Calu3 (cell line): ENCODE measurements at regions of chr15 and their contacts with region 1.

Region 1: DNA sequence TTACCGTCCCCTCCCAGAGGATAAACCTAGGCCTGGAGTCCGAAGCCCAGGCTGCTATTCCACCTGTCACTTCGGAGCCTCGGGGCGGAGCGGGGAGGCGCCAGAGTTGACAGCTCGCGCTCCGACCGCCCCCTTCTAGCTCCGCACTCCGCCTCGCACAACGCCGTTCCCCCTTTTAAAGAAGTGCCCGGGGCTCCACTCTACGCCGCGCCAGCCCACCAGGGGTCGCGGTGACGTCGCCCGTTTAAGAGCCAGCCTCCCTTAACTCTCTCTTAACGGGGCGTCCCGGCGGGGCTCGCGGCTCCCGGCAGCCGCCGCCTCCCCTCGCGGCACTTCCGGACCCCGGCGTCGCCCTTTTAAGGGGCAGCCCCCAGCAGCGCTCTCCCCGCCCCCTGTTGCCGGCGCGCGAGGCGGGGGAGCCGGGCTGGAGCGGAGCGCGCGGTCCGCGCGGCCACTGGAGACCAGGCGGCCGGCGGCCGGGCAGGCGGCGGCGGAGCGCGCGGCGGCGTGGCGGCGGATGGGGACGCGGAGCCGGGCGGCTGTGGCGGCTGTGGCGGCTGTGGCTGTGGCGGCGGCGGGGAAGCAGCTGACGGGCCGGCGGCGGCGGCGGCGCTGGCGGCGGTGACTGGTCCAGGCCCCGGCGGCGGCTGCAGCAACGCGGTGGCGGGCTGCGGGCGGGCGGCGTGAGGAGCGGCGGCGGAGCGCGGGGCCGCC is at the start of gene INAFM2:
- DNase-seq: peak; percentile 87
- H3K4me3 Mint-ChIP-seq: peak within 1 kb of the TSS; percentile 66
- H3K27ac Mint-ChIP-seq: no peak within 1 kb of the TSS
- H3K4me1 Mint-ChIP-seq: no peaks in the 10 kb centered on the region
- H3K27me3 Mint-ChIP-seq: no peaks in the 10 kb centered on the region
- CTCF ChIP-seq: no peak
- total RNA-seq, gene INAFM2: 14.3 and 16.6 TPM in 2 replicates

Region 2: DNA sequence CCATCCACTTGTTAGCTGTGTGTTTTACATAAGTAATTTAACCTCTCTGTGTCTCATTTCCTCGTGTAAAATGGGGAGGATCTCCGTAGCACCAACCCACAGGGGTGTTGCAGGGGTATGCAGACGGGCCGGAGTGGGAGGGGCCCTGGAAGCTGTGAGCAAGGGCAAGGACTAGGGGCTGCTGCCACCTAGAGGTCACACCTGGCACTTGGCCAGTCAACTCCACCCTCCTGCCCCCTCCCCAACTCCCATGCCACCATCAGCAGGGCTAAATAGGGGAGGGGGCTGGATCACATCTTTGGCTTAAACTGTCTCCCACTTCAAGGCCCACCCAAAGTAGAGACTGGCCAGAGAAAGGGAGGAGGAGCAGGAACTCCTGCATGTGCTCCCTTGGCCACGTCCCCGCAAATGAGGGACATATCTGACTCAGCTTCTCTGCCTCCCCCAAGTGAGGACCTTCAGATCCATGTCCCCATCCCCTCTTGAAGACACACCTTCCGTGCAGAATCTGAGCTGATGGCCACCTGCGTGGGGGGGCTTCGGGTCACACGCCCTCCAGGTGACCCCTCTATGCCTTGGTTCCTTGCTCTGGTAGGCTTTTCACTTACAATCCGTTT is 14.8 kb after region 1 on chr15:
- CTCF ChIA-PET with region 1: interaction called, 23 read pairs
- intact Hi-C with region 1: no loop called
- DNase-seq: peak; percentile 74
- H3K4me3 Mint-ChIP-seq: peak overlapping the region; percentile 77
- H3K27ac Mint-ChIP-seq: peak overlapping the region; percentile 89
- H3K4me1 Mint-ChIP-seq: peaks cover 25% of the 10 kb centered on the region
- H3K27me3 Mint-ChIP-seq: no peaks in the 10 kb centered on the region
- CTCF ChIP-seq: peak; percentile 43

Region 3: DNA sequence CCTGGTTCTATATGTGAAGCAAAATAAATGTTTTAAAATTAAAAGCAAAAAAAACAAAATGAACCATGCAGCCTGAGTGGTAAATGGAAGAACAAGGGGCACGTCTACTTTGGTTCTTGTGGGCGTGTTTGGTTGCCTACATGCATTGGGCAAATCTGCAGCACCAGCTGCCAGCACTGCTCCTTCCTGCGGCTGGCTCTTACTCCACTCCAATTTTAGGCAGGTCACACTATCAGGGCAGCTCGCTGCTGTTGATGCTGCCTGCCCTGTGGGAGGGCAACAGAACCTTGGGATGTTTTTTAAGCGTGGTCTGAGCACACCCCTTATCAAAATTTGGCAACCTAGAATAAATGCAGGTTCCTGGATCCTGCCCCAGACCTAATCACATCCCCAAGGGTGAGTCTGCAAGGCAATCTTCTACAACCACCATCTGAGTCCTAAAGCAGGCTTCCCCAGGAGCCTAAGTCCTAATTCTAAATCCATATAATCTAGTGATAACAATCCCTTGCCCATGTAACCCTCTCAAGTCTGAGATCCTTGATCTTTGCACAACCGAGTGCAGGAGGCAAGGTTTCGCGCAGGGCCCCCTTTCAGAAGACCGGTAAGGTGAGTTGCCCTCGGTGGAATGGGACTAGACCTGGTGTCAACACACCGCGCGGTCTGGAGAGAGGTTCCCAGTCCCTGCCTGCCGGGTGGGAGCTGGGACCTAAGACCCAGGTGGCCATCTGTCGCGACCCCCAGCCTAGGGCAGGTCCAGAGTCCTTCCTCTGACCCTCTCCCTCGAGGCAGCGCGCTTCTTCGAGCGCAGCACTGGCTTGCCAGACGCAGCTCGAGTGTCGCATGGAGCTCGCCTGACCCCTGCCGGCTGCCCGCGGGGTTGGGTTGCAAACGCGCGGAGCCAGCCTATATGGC is 98.1 kb after region 1 on chr15:
- CTCF ChIA-PET with region 1: interaction called, 4 read pairs
- intact Hi-C with region 1: loop called (anchors 5 kb)
- DNase-seq: peak; percentile 78
- H3K4me3 Mint-ChIP-seq: no peak overlapping the region
- H3K27ac Mint-ChIP-seq: no peak overlapping the region
- H3K4me1 Mint-ChIP-seq: peaks cover 10% of the 10 kb centered on the region
- H3K27me3 Mint-ChIP-seq: no peaks in the 10 kb centered on the region
- CTCF ChIP-seq: peak; percentile 73